Activated B cell treated with CpG ODN at 0.5 μM for 24 hours (primary cell): ENCODE measurements at regions of chr11 and their contacts with region 1.

Region 1: GRCh38 chr11:95212609-95213008 is 18.4 kb downstream of the SESN3 start:
- DNase-seq: no peak
- ATAC-seq: no peak
- H3K4me3 Mint-ChIP-seq: no peak overlapping the region
- H3K27ac Mint-ChIP-seq: no peak overlapping the region
- H3K4me1 Mint-ChIP-seq: peaks cover 39% of the 10 kb centered on the region
- H3K27me3 Mint-ChIP-seq: no peaks in the 10 kb centered on the region
- CTCF ChIP-seq: no peak

Region 2: GRCh38 chr11:95165638-95166037 is 47.0 kb before region 1 on chr11:
- CTCF ChIA-PET with region 1: no interaction called
- POLR2A ChIA-PET with region 1: no interaction called
- intact Hi-C with region 1: loop called (anchors 5 kb)
- DNase-seq: no peak
- ATAC-seq: no peak
- H3K4me3 Mint-ChIP-seq: no peak overlapping the region
- H3K27ac Mint-ChIP-seq: no peak overlapping the region
- H3K4me1 Mint-ChIP-seq: peaks cover 34% of the 10 kb centered on the region
- H3K27me3 Mint-ChIP-seq: no peaks in the 10 kb centered on the region
- CTCF ChIP-seq: no peak

Region 3: DNA sequence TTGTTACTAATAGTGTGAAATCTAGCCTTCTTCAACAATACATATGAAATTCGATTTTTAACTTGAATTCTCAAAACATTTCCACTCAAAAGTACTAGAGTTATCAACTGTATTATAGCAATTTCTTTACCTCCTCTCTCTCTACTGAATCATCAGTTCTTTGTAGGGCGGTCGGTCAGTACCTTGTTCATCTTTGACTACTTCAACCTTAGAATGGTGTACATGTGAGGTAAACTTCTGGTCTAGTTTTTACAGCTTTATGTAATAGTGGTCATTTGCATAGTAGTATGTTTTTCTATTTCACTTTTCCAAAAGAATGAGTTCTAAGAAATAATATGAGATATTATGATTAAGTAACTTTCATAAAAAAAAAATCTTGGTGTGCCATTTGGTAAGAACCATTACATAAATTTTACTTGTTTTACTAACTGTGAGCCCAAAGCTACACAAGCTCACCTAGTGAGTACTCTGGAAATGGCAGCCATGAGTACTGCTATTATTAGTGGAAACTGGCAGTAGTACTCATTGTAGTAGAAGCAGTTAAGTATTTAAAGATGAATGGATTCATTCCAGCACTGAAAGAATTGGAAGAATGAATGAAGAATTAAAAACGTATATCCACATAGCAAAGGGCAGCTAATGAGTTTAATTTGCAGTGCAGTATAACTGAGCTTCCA is 11.7 kb before region 1 on chr11:
- CTCF ChIA-PET with region 1: interaction called, 6 read pairs
- POLR2A ChIA-PET with region 1: interaction called, 6 read pairs
- intact Hi-C with region 1: loop called (anchors 2 kb)
- DNase-seq: no peak
- ATAC-seq: no peak
- H3K4me3 Mint-ChIP-seq: no peak overlapping the region
- H3K27ac Mint-ChIP-seq: no peak overlapping the region
- H3K4me1 Mint-ChIP-seq: peaks cover 63% of the 10 kb centered on the region
- H3K27me3 Mint-ChIP-seq: no peaks in the 10 kb centered on the region
- CTCF ChIP-seq: no peak

Region 4: DNA sequence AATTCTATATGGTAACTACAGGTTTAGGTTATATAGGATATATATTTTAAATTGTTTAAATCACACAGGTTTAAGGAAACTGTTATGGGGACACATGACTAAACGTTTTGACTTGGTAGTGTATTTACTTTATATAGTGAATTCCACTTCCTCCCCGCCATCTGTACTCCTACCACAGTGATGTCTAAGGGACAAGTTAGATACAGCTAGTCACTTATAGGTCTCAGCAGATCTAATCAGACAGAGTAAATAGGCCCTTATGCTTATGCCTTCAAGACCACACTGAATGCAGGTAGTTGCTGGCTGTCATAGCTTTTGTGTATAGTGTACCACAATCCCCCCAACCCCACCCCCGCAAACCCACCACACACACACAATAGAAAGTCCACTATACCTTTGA is 10.2 kb after region 1 on chr11:
- CTCF ChIA-PET with region 1: no interaction called
- POLR2A ChIA-PET with region 1: interaction called, 5 read pairs
- intact Hi-C with region 1: loop called (anchors 1 kb)
- DNase-seq: no peak
- ATAC-seq: peak; percentile 47
- H3K4me3 Mint-ChIP-seq: no peak overlapping the region
- H3K27ac Mint-ChIP-seq: peak overlapping the region; percentile 26
- H3K4me1 Mint-ChIP-seq: peaks cover 48% of the 10 kb centered on the region
- H3K27me3 Mint-ChIP-seq: no peaks in the 10 kb centered on the region
- CTCF ChIP-seq: no peak

Region 5: GRCh38 chr11:95248666-95249467 is 36.3 kb after region 1 on chr11:
- CTCF ChIA-PET with region 1: no interaction called
- POLR2A ChIA-PET with region 1: interaction called, 11 read pairs
- intact Hi-C with region 1: no loop called
- DNase-seq: no peak
- ATAC-seq: peak; percentile 86
- H3K4me3 Mint-ChIP-seq: peak overlapping the region; percentile 73
- H3K27ac Mint-ChIP-seq: peak overlapping the region; percentile 95
- H3K4me1 Mint-ChIP-seq: peaks cover 59% of the 10 kb centered on the region
- H3K27me3 Mint-ChIP-seq: no peaks in the 10 kb centered on the region
- CTCF ChIP-seq: no peak